Common myeloid progenitor, CD34-positive (primary cell): ENCODE measurements at regions of chr15 and their contacts with region 1.

Region 1: GRCh38 chr15:98856218-98856907 is 151.2 kb downstream of the PGPEP1L start:
- DNase-seq: no peak
- H3K4me3 ChIP-seq: no peak overlapping the region
- H3K27ac ChIP-seq: no peak overlapping the region
- H3K4me1 ChIP-seq: peaks cover 20 to 44% (median 26%) of the 10 kb centered on the region in 4 experiments
- H3K27me3 ChIP-seq: no peaks in the 10 kb centered on the region

Region 2: DNA sequence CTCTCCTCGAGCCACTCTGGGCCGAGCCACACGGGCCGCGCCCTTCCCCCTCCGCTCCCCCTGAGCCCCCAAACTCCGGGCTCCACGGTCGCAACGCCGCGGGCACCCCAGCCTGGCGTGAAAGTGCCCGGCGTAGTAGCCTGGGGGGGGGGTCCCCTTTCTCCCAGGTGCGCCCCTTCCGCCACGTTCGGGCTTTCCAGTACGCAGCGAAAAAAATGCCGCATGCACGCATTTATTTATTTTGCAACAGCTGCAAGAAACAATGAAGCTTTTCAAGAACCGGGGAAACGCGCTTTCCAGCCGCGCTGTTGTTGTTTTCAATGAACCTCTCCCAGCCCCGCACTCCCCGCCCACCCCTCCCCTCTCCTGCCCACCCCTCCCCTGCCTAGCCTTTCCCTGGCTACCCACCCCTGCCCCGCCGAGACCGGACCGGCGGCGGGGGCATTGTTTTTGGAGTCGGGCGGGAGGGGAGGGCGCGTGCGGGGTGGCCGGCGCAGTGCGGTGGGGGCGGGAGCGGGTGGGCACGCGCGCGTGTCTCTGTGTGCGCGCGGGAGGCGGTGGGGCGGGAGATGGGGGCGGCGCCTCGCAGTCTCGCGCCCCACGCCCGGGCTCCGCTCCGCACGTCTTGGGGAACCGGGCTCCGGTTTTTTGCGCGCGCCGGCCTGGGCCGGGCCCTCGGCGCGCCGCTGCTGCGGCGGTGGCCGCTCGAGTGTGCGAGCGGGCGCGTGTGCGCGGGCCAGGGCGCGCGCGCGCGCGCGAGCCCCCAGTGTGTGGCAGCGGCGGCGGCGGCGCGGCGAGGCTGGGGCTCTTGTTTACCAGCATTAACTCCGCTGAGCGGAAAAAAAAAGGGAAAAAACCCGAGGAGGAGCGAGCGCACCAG is 208.3 kb before region 1 on chr15 and contains the start of gene IGF1R:
- CTCF ChIA-PET with region 1: interaction called, 10 read pairs
- POLR2A ChIA-PET with region 1: no interaction called
- DNase-seq: peak; percentile 89 to 95 (median 95)
- H3K4me3 ChIP-seq: peak within 1 kb of the TSS; percentile 75 to 95 (median 89)
- H3K27ac ChIP-seq: peak within 1 kb of the TSS in 1 of 2 experiments; percentile 58
- H3K4me1 ChIP-seq: peaks cover 10 to 38% (median 31%) of the 10 kb centered on the region in 4 experiments
- H3K27me3 ChIP-seq: peaks cover 0 to 30% (median 17%) of the 10 kb centered on the region in 5 experiments

Region 3: GRCh38 chr15:98694161-98694560 is 162.2 kb before region 1 on chr15:
- CTCF ChIA-PET with region 1: no interaction called
- POLR2A ChIA-PET with region 1: no interaction called
- DNase-seq: no peak
- H3K4me3 ChIP-seq: no peak overlapping the region
- H3K27ac ChIP-seq: no peak overlapping the region
- H3K4me1 ChIP-seq: no peaks in the 10 kb centered on the region
- H3K27me3 ChIP-seq: no peaks in the 10 kb centered on the region

Region 4: DNA sequence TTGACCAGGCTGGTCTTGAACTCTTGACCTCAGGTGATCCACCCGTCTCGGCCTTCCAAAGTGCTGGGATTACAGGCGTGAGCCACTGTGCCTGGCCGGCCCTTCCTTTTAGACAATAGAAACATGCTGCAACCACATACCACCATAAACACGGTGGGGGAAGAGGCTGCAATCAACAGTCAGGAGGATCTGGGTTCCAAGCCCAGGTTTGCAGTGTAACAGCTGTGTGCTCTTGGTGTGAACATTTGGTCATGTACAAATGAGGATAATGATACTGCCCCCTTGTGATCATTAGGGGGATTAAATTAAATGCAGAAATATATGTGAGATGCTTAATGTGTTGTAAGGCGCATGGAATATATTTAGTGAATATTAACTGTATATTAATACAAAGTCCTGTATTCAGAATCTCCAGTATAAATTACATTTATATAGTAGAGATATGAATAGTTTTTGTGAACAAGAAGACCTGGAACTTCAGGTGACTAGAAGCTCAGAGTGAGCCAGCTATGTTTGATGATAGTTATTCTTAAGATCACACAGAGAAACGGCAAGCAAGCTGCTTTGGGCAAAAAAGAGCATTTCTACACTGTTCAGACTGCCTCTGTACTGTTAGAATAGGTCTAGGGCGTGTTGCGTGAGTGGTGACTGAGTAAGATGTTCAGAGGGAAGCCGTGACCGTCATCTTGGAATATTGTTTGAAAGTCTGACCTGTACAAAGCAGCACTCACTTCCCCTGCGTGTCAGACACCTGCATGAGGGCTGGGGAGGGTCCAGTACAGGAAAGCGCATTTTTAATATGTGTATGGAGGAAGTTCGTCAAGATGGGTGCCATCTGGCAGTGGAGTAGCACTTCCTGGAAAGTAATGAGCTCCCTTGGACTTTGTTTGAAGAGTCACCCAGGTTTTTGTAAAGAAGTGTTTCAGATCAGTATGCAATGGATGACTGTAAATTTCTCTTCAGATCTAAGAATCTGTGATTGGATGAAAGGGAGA is 25.5 kb after region 1 on chr15:
- CTCF ChIA-PET with region 1: interaction called, 16 read pairs
- POLR2A ChIA-PET with region 1: no interaction called
- DNase-seq: peak; percentile 59 to 83 (median 79)
- H3K4me3 ChIP-seq: no peak overlapping the region
- H3K27ac ChIP-seq: no peak overlapping the region
- H3K4me1 ChIP-seq: peaks cover 6 to 11% (median 8%) of the 10 kb centered on the region in 4 experiments
- H3K27me3 ChIP-seq: no peaks in the 10 kb centered on the region

Region 5: GRCh38 chr15:98966091-98966787 is 109.9 kb after region 1 on chr15:
- CTCF ChIA-PET with region 1: no interaction called
- POLR2A ChIA-PET with region 1: no interaction called
- DNase-seq: no peak
- H3K4me3 ChIP-seq: no peak overlapping the region
- H3K27ac ChIP-seq: no peak overlapping the region
- H3K4me1 ChIP-seq: no peaks in the 10 kb centered on the region
- H3K27me3 ChIP-seq: no peaks in the 10 kb centered on the region